ENCODE measurements at regions of chr16 and their contacts with region 1.

Region 1: DNA sequence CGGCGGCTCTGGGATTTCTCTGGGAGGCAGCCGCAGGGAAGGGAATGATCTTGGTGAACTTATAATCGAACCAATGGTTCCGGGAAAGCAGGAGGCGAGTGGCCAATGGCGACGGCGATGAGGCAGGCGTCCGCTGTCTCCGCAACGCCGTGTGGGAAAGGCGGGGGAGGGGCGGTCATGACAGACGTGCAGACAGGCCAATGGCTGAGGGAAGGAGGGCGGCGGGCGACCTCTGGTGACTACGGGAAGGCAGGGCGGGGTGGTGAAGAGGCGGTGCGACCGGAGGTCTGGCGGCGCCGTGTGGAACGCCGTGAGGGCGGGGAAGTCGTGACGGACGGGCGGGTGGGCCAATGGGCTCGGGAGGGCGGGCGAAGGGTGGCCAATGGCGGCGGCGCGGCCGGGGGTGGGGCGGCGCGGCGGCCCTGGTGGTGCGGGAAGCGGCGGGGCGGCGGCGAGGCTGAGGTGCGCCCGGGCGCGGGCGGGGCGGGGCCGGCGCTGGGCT is at the start of gene RAB40C:
- DNase-seq: peak; percentile 95
- H3K4me3 ChIP-seq: peak within 1 kb of the TSS; percentile 74 to 97 (median 91)
- H3K27ac ChIP-seq: peak within 1 kb of the TSS; percentile 69
- H3K4me1 ChIP-seq: peaks cover 56% of the 10 kb centered on the region
- H3K27me3 ChIP-seq: no peaks in the 10 kb centered on the region
- CTCF ChIP-seq: no peak
- total RNA-seq, gene RAB40C: 11.3 to 19.9 TPM

Region 2: DNA sequence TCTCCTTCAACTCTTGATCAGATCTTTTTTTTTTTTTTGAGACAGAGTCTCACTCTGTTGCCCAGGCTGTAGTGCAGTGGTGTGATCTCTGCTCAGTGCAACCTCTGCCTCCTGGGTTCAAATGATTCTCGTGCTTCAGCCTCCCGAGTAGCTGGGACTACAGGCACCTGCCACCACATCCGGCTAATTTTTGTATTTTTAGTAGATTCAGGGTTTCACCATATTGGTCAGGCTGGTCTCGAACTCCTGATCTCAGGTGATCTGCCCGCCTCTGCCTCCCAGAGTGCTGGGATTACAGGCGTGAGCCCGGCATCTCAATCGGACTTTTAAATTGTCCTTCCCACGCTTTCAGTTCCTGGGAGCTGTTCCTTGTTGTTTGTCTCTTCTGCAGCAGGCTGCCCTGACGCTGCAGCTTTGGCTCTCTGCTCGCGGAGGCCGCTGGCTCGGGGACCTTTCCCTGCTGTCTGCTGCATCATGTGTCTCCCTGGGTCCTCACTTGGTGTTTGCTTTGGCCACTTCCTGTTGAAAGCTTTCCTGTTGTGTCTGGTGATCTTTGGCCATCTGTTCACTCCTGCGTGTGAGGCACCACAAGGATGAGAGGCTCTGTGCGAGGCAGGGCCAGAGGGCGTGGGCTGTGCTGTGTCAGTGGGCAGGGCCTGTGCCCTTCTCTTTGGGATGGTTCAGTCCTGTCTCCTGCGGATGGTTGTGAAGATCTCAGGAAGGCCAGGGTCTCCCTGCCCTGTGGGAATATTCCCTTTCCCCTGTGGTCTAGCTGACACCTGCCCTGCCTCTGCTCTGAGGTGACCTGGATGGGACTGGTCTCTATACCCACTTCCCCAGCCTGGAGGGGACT is 80.6 kb before region 1 on chr16:
- CTCF ChIA-PET with region 1: no interaction called
- dilution Hi-C with region 1: loop called (anchors 5 kb)
- in situ Hi-C with region 1: no loop called
- intact Hi-C with region 1: no loop called
- DNase-seq: no peak
- H3K4me3 ChIP-seq: no peak overlapping the region
- H3K27ac ChIP-seq: no peak overlapping the region
- H3K4me1 ChIP-seq: no peaks in the 10 kb centered on the region
- H3K27me3 ChIP-seq: no peaks in the 10 kb centered on the region
- CTCF ChIP-seq: no peak

Region 3: GRCh38 chr16:569445-570254 is 20.1 kb before region 1 on chr16 and contains the start of gene PIGQ:
- CTCF ChIA-PET with region 1: no interaction called
- dilution Hi-C with region 1: no loop called
- in situ Hi-C with region 1: no loop called
- intact Hi-C with region 1: loop called (anchors 1 kb)
- DNase-seq: peak; percentile 55
- H3K4me3 ChIP-seq: peak within 1 kb of the TSS; percentile 52 to 79 (median 66)
- H3K27ac ChIP-seq: peak within 1 kb of the TSS; percentile 34
- H3K4me1 ChIP-seq: peaks cover 22% of the 10 kb centered on the region
- H3K27me3 ChIP-seq: no peaks in the 10 kb centered on the region
- CTCF ChIP-seq: no peak
- total RNA-seq, gene PIGQ: 24.7 to 45.5 TPM

Region 4: GRCh38 chr16:621528-622105 is 31.9 kb after region 1 on chr16:
- CTCF ChIA-PET with region 1: no interaction called
- dilution Hi-C with region 1: loop called (anchors 5 kb)
- in situ Hi-C with region 1: no loop called
- intact Hi-C with region 1: loop called (anchors 1 kb)
- DNase-seq: no peak
- H3K4me3 ChIP-seq: no peak overlapping the region
- H3K27ac ChIP-seq: no peak overlapping the region
- H3K4me1 ChIP-seq: peaks cover 26% of the 10 kb centered on the region
- H3K27me3 ChIP-seq: no peaks in the 10 kb centered on the region
- CTCF ChIP-seq: no peak

Region 5: DNA sequence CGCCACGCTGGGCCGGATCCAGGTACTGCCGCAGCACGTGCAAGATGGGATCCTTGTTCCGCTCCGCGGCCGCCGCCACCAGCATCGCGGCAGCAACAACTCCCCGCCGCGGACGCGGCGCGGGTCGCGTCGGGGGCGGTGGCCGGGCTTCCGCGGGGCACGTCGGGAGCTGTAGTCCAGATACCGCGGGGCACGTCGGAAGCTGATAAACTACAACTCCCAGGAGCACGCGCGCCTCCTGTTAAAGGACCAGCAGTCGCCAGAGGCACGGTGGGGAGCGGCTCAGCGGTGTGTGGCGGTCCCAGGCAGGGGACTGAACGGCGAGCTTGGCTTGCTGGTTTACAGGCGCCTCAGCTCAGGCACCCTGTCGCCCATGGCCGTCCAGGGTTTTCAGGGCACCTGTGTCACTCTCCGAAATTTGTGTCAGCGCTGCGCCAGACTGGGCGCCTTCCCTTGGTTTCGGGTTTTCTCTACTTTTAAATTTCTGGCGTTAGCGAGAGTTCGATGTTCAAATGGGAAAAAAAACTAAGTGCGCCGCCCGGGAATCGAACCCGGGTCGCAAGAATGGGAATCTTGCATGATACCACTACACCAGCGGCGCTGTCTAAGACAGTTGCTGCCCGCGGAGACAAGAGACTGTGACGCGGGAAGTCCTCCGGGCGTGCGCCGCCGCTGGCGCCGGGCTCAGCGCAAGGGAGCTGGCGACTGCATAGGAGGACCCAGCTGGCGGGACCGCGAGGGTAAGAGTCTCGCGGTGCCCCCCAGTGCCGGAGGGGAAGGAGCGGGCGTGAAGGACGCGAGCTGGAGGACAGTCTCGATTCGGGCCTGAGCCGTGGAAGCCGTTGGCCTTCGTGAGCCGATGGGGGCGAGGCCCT is 46.7 kb after region 1 on chr16 and contains the start of gene METTL26:
- CTCF ChIA-PET with region 1: no interaction called
- dilution Hi-C with region 1: no loop called
- in situ Hi-C with region 1: no loop called
- intact Hi-C with region 1: loop called (anchors 1 kb)
- DNase-seq: peak; percentile 91
- H3K4me3 ChIP-seq: peak within 1 kb of the TSS; percentile 44 to 94 (median 85)
- H3K27ac ChIP-seq: peak within 1 kb of the TSS; percentile 33
- H3K4me1 ChIP-seq: peaks cover 14% of the 10 kb centered on the region
- H3K27me3 ChIP-seq: no peaks in the 10 kb centered on the region
- CTCF ChIP-seq: peak in 1 of 2 donors; percentile 10
- total RNA-seq, gene METTL26: 43.3 to 95.7 TPM

Region 6: DNA sequence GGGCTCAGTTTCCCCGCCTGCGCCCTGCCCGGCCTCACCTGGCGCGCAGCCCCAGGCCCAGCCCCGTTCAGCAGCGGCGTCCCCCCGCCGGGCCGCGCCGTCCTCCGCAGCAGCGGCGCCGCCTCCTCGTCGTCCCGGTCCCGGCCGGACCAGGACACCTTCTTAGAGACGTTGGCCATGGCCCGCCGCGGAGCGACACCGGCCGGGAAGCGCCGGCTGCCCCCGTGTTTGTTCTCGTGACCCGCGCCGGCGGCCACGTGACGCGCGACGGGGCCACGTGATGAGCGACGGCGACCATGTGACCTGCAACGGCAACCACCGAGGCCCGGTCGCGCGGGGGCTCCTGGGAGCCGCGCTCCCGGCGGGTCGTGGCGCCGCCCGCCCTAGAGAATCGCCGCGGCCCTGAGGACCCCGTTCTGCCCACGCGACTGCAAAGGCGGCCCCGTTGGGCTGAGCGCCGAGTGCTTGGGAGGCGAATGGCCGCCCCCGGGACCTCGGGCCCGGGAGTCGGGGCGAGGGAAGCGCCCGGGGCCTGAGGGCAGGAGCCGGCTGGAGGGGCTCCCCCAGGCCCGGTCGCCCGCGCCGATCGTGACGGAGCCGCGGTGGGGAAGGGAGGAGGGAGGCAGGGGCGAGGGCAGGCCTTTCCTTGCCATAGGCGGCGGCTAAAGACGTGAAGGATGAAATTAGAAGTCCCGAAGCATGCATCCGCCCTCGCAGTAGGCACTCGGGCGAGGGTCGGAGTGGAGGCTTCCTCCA is 885.3 kb after region 1 on chr16 and contains the start of gene CLCN7:
- CTCF ChIA-PET with region 1: no interaction called
- dilution Hi-C with region 1: no loop called
- in situ Hi-C with region 1: no loop called
- intact Hi-C with region 1: no loop called
- DNase-seq: peak; percentile 80
- H3K4me3 ChIP-seq: peak within 1 kb of the TSS; percentile 66 to 77 (median 74)
- H3K27ac ChIP-seq: peak within 1 kb of the TSS; percentile 54
- H3K4me1 ChIP-seq: peaks cover 24% of the 10 kb centered on the region
- H3K27me3 ChIP-seq: no peaks in the 10 kb centered on the region
- CTCF ChIP-seq: no peak
- total RNA-seq, gene CLCN7: 52.9 to 66.2 TPM

Measured in mammary epithelial cell (primary cell).